PC-3 (cell line): ENCODE measurements at regions of chr18 and their contacts with region 1.

Region 1: GRCh38 chr18:45169610-45170009 is 445.7 kb upstream of the SLC14A2 start:
- DNase-seq: peak; percentile 75
- ATAC-seq: peak; percentile 15; the same call in 1 of the 2 replicates
- H3K4me3 ChIP-seq: no peak overlapping the region
- H3K27ac ChIP-seq: peak overlapping the region; percentile 100
- H3K4me1 ChIP-seq: peaks cover 50% of the 10 kb centered on the region
- H3K27me3 ChIP-seq: no peaks in the 10 kb centered on the region
- CTCF ChIP-seq: no peak

Region 2: GRCh38 chr18:45212181-45213039 is 42.8 kb after region 1 on chr18:
- CTCF ChIA-PET with region 1: no interaction called
- POLR2A ChIA-PET with region 1: no interaction called
- intact Hi-C with region 1: loop called (anchors 5 kb)
- DNase-seq: peak; percentile 69
- ATAC-seq: peak; percentile 84
- H3K4me3 ChIP-seq: no peak overlapping the region
- H3K27ac ChIP-seq: no peak overlapping the region
- H3K4me1 ChIP-seq: peaks cover 3% of the 10 kb centered on the region; the same call in 1 of the 2 replicates
- H3K27me3 ChIP-seq: no peaks in the 10 kb centered on the region
- CTCF ChIP-seq: peak; percentile 89

Region 3: DNA sequence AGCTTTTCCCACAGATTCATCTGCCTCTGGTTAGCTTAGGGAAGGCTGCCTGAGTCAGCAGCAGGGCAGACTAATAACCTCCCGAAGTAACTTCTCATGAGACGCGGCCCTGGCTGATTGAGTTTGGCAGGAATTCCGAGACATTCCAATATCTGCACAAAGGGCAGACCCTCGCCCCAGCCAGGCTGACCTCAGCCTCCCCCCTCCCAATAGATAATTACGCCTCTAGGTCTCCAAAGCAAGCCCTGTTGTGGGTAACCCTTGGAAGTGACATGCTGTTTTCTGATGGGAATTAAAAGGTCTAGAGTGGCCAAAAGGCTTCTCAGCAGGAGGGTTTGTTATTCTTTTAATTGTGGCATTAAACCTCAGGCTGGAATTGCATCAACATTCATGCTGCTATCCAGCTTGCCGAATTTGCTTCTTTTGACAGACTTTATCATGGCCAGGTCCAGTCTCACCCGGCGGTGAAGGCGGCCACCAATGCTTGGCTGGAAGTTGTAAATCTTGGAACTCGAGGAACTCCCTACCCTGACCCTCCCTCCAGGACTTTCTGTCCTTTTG is 347.7 kb after region 1 on chr18:
- CTCF ChIA-PET with region 1: no interaction called
- POLR2A ChIA-PET with region 1: no interaction called
- intact Hi-C with region 1: no loop called
- DNase-seq: no peak
- ATAC-seq: no peak
- H3K4me3 ChIP-seq: no peak overlapping the region
- H3K27ac ChIP-seq: no peak overlapping the region
- H3K4me1 ChIP-seq: no peaks in the 10 kb centered on the region
- H3K27me3 ChIP-seq: no peaks in the 10 kb centered on the region
- CTCF ChIP-seq: no peak